CD8-positive, alpha-beta T cell (primary cell): ENCODE measurements at regions of chr5 and their contacts with region 1.

Region 1: GRCh38 chr5:139560752-139561654 is at the start of gene UBE2D2:
- DNase-seq: peak; percentile 96 to 99 (median 97)
- ATAC-seq: peak; percentile 84
- H3K4me3 ChIP-seq: peak within 1 kb of the TSS; percentile 84 to 91
- H3K4me3 Mint-ChIP-seq: peak within 1 kb of the TSS; percentile 93
- H3K27ac ChIP-seq: peak within 1 kb of the TSS; percentile 87 to 89
- H3K27ac Mint-ChIP-seq: peak within 1 kb of the TSS; percentile 97
- H3K4me1 ChIP-seq: peaks cover 30% of the 10 kb centered on the region
- H3K4me1 Mint-ChIP-seq: peaks cover 35% of the 10 kb centered on the region
- H3K27me3 ChIP-seq: no peaks in the 10 kb centered on the region
- H3K27me3 Mint-ChIP-seq: no peaks in the 10 kb centered on the region
- CTCF ChIP-seq: no peak
- total RNA-seq, gene UBE2D2: 180 TPM

Region 2: GRCh38 chr5:139341650-139342422 is 219.2 kb before region 1 on chr5 and contains the start of gene PAIP2:
- CTCF ChIA-PET with region 1: no interaction called
- POLR2A ChIA-PET with region 1: interaction called, 4 read pairs
- intact Hi-C with region 1: loop called in 1 of 2 experiments (anchors 1 kb)
- DNase-seq: peak; percentile 96 to 99 (median 98)
- ATAC-seq: peak; percentile 79
- H3K4me3 ChIP-seq: peak within 1 kb of the TSS; percentile 92 to 100
- H3K4me3 Mint-ChIP-seq: peak within 1 kb of the TSS; percentile 99
- H3K27ac ChIP-seq: peak within 1 kb of the TSS; percentile 100
- H3K27ac Mint-ChIP-seq: peak within 1 kb of the TSS; percentile 100
- H3K4me1 ChIP-seq: peaks cover 36% of the 10 kb centered on the region
- H3K4me1 Mint-ChIP-seq: peaks cover 48% of the 10 kb centered on the region
- H3K27me3 ChIP-seq: no peaks in the 10 kb centered on the region
- H3K27me3 Mint-ChIP-seq: no peaks in the 10 kb centered on the region
- CTCF ChIP-seq: peak; percentile 68
- total RNA-seq, gene PAIP2: 173 to 179 TPM

Region 3: GRCh38 chr5:139543423-139543991 is 17.5 kb before region 1 on chr5:
- CTCF ChIA-PET with region 1: interaction called, 10 read pairs
- POLR2A ChIA-PET with region 1: interaction called, 4 read pairs
- intact Hi-C with region 1: loop called in 1 of 2 experiments (anchors 2 kb)
- DNase-seq: peak; percentile 5 to 76 (median 55)
- ATAC-seq: peak; percentile 90
- H3K4me3 ChIP-seq: peak overlapping the region in 1 of 2 experiments; percentile 47
- H3K4me3 Mint-ChIP-seq: peak overlapping the region; percentile 51
- H3K27ac ChIP-seq: peak overlapping the region in 1 of 2 experiments; percentile 17
- H3K27ac Mint-ChIP-seq: peak overlapping the region; percentile 32
- H3K4me1 ChIP-seq: no peaks in the 10 kb centered on the region
- H3K4me1 Mint-ChIP-seq: peaks cover 7% of the 10 kb centered on the region
- H3K27me3 ChIP-seq: no peaks in the 10 kb centered on the region
- H3K27me3 Mint-ChIP-seq: no peaks in the 10 kb centered on the region
- CTCF ChIP-seq: peak; percentile 38

Region 4: DNA sequence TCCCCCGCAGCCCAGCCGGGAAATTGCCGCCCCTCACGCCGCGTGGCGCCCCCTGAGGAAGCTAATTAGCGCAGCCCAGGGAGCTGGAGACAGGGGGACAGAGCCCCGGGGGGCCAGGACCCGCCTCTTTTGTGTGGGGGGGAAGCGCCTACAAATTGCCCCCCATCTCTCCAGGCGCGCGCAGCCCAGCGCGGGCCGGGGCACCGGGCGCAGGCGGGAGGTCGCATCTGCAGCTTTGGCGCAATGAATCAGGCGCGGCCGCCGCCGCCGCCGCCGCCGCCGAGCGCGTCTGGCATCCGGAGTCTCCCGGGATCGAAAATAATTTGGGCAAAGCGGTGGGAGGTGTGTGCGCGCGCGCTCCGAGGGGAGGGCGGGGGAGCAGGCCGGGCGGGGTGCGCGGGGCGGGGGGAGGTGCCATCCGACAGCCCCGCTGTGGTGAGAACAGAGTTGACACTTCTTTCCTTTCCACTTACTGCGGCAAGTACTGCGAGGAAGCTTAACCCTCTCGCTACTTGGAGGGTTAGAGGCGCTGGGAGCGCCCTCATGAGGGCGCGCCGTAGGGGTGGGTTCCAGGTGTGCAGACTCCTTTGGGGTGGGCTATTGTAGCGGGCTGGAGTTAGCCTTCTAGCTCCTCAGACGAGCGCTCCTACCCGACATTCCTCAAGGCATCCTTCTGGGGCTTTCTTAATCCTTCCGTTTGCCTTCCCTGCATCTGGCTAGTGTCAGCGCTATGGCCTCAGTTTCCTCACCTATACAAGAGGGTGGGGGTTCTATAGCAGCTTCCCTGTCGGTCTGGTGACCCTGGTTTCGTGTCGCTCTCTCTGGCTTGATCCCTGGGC is 150.3 kb after region 1 on chr5:
- CTCF ChIA-PET with region 1: no interaction called
- POLR2A ChIA-PET with region 1: interaction called, 12 read pairs
- intact Hi-C with region 1: loop called in 1 of 2 experiments (anchors 5 kb)
- DNase-seq: peak; percentile 32 to 90 (median 71)
- ATAC-seq: peak; percentile 60
- H3K4me3 ChIP-seq: peak overlapping the region; percentile 63 to 64
- H3K4me3 Mint-ChIP-seq: peak overlapping the region; percentile 77
- H3K27ac ChIP-seq: peak overlapping the region; percentile 66 to 84
- H3K27ac Mint-ChIP-seq: no peak overlapping the region
- H3K4me1 ChIP-seq: peaks cover 28% of the 10 kb centered on the region
- H3K4me1 Mint-ChIP-seq: peaks cover 39% of the 10 kb centered on the region
- H3K27me3 ChIP-seq: no peaks in the 10 kb centered on the region
- H3K27me3 Mint-ChIP-seq: no peaks in the 10 kb centered on the region
- CTCF ChIP-seq: no peak